Calu3 (cell line): ENCODE measurements at regions of chr17 and their contacts with region 1.

Region 1: GRCh38 chr17:76278952-76279741 is 14.0 kb downstream of the UBALD2 start:
- DNase-seq: peak; percentile 91
- H3K4me3 Mint-ChIP-seq: no peak overlapping the region
- H3K27ac Mint-ChIP-seq: no peak overlapping the region
- H3K4me1 Mint-ChIP-seq: peaks cover 8% of the 10 kb centered on the region
- H3K27me3 Mint-ChIP-seq: no peaks in the 10 kb centered on the region
- CTCF ChIP-seq: peak; percentile 98

Region 2: GRCh38 chr17:76005263-76006149 is 273.6 kb before region 1 on chr17:
- CTCF ChIA-PET with region 1: no interaction called
- intact Hi-C with region 1: no loop called
- DNase-seq: peak; percentile 91
- H3K4me3 Mint-ChIP-seq: peak overlapping the region; percentile 14
- H3K27ac Mint-ChIP-seq: peak overlapping the region; percentile 53
- H3K4me1 Mint-ChIP-seq: peaks cover 12% of the 10 kb centered on the region
- H3K27me3 Mint-ChIP-seq: no peaks in the 10 kb centered on the region
- CTCF ChIP-seq: peak; percentile 71

Region 3: DNA sequence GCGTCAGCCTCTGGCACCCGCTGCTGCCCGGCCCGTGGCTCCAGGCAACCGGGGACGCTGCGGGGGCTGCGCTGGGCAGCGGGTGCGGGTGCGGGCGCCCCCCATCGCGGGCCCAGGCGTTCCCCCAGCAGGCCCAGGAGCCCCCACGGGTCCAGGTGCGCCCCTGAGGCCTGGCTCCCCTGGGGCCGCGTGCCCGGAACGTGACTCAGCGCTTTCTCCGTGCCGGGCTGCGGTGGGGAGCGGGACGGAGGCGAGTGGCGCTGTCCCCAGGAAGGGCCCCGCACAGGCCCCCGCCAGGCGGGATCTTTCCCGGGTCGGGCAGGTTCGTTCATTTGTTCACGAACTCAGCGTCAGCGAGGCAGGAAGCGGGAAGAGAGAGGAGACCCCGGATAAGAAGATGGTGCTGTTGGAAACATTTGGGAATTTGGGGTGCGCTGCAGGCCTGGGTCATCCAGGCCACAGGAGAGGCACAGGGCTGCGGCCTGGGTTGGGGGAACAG is 157.2 kb before region 1 on chr17:
- CTCF ChIA-PET with region 1: interaction called, 36 read pairs
- intact Hi-C with region 1: loop called (anchors 2 kb)
- DNase-seq: no peak
- H3K4me3 Mint-ChIP-seq: no peak overlapping the region
- H3K27ac Mint-ChIP-seq: no peak overlapping the region
- H3K4me1 Mint-ChIP-seq: no peaks in the 10 kb centered on the region
- H3K27me3 Mint-ChIP-seq: no peaks in the 10 kb centered on the region
- CTCF ChIP-seq: no peak

Region 4: DNA sequence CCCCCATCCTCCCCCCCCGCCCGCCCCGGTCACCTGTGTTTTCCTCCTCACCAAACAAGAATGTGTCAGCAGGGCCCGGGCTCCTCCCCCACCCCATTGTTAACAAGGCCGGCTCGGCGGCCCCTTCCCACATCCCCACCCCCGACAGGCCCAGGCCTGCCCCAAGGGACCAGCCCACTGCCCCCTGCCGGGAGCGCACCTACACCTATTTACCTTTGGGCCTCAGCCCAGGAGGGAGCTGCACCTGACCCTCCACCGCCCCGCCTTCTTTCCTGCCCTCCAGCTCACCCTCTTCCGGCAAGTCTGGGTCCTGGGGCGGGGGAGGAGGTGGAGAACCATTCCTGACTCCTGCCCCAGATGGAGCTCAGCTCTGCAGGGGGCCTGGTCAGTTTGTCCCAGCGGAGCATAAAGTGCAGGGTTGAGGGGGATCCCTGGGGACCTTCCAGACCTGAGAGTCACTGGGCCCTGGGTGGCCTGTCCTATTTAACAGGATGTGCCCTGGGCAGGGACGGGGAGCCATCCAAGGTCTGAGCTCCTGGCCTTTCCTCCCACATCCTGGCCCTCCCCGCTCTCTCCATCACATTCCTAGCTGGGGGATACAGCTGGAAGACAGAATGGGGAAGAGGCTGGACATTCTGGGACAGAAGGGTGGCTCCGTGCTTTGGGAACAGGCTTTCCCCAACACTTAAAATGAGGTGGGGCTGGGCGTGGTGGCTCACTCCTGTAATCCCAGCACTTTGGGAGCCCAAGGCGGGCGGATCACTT is 146.4 kb before region 1 on chr17:
- CTCF ChIA-PET with region 1: interaction called, 20 read pairs
- intact Hi-C with region 1: no loop called
- DNase-seq: peak; percentile 82
- H3K4me3 Mint-ChIP-seq: peak overlapping the region; percentile 55
- H3K27ac Mint-ChIP-seq: no peak overlapping the region
- H3K4me1 Mint-ChIP-seq: peaks cover 18% of the 10 kb centered on the region
- H3K27me3 Mint-ChIP-seq: no peaks in the 10 kb centered on the region
- CTCF ChIP-seq: no peak

Region 5: GRCh38 chr17:76182016-76182764 is 97.0 kb before region 1 on chr17:
- CTCF ChIA-PET with region 1: interaction called, 22 read pairs
- intact Hi-C with region 1: no loop called
- DNase-seq: peak; percentile 90
- H3K4me3 Mint-ChIP-seq: no peak overlapping the region
- H3K27ac Mint-ChIP-seq: no peak overlapping the region
- H3K4me1 Mint-ChIP-seq: no peaks in the 10 kb centered on the region
- H3K27me3 Mint-ChIP-seq: no peaks in the 10 kb centered on the region
- CTCF ChIP-seq: peak; percentile 83

Region 6: GRCh38 chr17:76239538-76240274 is 39.4 kb before region 1 on chr17:
- CTCF ChIA-PET with region 1: interaction called, 9 read pairs
- intact Hi-C with region 1: loop called (anchors 5 kb)
- DNase-seq: no peak
- H3K4me3 Mint-ChIP-seq: peak overlapping the region; percentile 82
- H3K27ac Mint-ChIP-seq: peak overlapping the region; percentile 6
- H3K4me1 Mint-ChIP-seq: peaks cover 9% of the 10 kb centered on the region
- H3K27me3 Mint-ChIP-seq: no peaks in the 10 kb centered on the region
- CTCF ChIP-seq: no peak

Region 7: GRCh38 chr17:76246080-76247066 is 32.8 kb before region 1 on chr17:
- CTCF ChIA-PET with region 1: interaction called, 10 read pairs
- intact Hi-C with region 1: no loop called
- DNase-seq: no peak
- H3K4me3 Mint-ChIP-seq: no peak overlapping the region
- H3K27ac Mint-ChIP-seq: no peak overlapping the region
- H3K4me1 Mint-ChIP-seq: peaks cover 19% of the 10 kb centered on the region
- H3K27me3 Mint-ChIP-seq: no peaks in the 10 kb centered on the region
- CTCF ChIP-seq: no peak

Region 8: GRCh38 chr17:76264755-76265596 is 14.2 kb before region 1 on chr17 and contains the start of gene UBALD2:
- CTCF ChIA-PET with region 1: interaction called, 11 read pairs
- intact Hi-C with region 1: no loop called
- DNase-seq: peak; percentile 99
- H3K4me3 Mint-ChIP-seq: peak within 1 kb of the TSS; percentile 90
- H3K27ac Mint-ChIP-seq: peak within 1 kb of the TSS; percentile 93
- H3K4me1 Mint-ChIP-seq: peaks cover 50% of the 10 kb centered on the region
- H3K27me3 Mint-ChIP-seq: no peaks in the 10 kb centered on the region
- CTCF ChIP-seq: no peak
- total RNA-seq, gene UBALD2: 74.3 and 87.9 TPM in 2 replicates